Gastrocnemius medialis (tissue), 4 donors: ENCODE measurements at regions of chr5 and their contacts with region 1.

Region 1: DNA sequence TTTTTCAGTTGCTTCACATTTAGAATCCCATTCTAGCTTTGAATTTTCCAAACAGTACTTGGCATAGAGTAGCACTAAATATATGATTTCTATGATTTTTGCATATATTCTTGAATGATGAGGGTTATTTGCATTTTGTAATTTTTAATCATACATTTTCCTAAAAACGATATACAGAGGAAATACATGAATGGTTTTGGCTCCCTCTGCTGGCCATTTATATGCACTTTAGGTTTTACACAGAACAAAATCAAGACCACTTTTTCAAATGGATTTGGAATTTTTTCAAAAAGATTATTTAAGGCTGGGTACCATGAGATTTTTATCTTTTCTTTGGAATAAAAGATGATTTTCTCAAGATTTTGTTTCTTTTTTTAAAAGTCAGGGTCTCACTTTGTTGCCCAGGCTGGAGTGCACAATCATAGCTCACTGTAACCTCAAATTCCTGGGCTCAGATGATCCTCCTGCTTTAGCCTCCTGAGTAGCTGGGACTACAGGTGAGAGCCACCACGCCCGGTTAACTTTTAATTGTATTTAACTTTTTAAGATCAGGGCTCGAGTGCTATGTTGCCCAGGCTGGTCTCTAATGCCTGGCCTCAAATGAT is 16.7 kb upstream of the COMMD10 start:
- DNase-seq: no peak
- ATAC-seq: no peak
- H3K4me3 ChIP-seq: no peak overlapping the region
- H3K27ac ChIP-seq: no peak overlapping the region
- H3K4me1 ChIP-seq: no peaks in the 10 kb centered on the region
- H3K27me3 ChIP-seq: peaks cover 0 to 3% (median 0%) of the 10 kb centered on the region in 3 donors
- CTCF ChIP-seq: peak; percentile 54 to 83 (median 81)
- POLR2A ChIP-seq: no peak

Region 2: DNA sequence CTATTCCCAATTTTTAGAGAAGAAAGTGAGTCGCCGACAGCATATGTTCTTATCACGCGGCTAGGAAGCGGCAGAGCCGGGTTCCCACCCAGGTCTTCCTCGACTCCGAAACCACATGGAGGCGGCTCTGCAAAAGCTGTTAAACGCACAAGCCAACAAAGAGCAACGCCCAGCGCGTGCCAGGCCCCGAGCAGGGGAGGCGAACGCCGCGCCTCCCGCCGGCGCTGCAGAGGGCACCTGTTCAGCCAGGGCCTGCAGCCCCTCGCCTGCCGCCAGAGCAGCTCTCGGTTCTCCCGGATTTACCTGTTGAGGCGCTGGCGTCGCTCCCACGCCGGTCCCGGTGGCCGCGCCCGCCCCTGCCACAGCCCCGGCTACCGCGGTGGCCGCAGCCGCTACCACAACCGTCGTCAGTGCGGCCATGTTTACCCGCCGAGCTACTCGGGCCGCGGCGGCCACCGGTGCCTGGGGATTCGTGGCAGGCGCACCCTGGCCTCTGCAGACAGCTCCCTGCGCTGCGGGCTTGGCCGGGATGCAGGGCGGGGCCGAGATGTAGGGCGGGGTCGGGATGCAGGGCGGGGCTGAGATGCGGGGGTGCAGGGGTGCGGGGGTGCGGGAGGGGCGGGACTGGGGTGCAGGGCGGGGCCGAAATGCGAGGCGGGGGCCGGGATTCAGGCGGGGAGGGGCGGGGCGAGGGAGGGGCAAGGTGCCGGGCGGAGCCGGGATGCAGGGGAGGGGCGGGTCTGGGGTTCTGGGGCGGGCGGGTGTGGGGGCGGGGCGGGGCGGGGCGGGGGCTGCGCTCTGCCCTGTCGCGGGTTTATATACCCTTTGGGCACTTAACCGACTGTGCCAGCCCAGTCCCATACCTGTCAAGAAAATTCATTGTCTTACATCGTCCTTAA is 771.8 kb before region 1 on chr5 and contains the start of gene CCDC112:
- in situ Hi-C with region 1: loop called in 1 of 4 experiments (anchors 25 kb)
- intact Hi-C with region 1: no loop called
- DNase-seq: peak; percentile 45 to 55
- ATAC-seq: peak; percentile 67 to 81
- H3K4me3 ChIP-seq: peak within 1 kb of the TSS; percentile 71 to 91 (median 79)
- H3K27ac ChIP-seq: peak within 1 kb of the TSS in 3 of 4 donors; percentile 32 to 61 (median 39)
- H3K4me1 ChIP-seq: peaks cover 7 to 9% of the 10 kb centered on the region in 2 donors
- H3K27me3 ChIP-seq: no peaks in the 10 kb centered on the region
- CTCF ChIP-seq: no peak
- POLR2A ChIP-seq: peak in 1 of 2 donors; percentile 37
- total RNA-seq, gene CCDC112: 2.1 to 4.8 (median 3.8) TPM

Region 3: DNA sequence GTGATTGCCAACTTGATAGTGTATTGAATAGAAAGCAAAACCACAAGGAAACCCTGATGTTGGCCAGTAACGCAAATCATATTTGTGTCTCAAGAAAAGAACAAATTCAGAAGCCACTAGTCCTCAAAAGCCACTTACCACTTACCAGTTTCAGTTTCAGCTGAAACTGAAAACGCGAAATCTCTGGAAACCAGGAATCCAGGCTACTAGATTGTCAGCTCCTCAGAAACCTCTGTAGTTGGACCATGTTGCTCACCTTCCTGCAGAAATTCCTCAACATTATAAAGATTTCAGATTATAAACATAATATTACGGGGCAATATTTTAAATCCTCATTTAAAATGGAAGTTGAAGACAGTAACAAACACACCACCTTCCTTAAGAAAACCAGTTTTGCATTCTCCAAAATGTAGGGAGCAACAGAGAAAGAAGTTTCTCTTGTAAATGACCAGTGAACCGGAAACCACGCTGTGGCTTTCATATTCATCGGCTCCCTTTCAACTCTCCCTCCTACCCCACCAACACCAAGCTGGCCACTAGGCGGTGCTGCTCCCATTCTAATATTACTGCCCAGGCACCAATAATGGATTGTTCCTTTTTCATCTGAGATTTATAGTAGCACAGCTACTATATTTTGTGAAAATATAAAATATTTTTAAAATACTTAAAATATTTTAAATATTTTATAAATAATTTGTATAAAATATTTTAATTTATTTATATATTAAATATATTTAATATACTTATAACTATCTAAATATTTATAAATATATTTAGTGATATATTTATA is 433.6 kb before region 1 on chr5:
- in situ Hi-C with region 1: no loop called
- intact Hi-C with region 1: loop called (anchors 2 kb)
- DNase-seq: peak; percentile 65 to 77
- ATAC-seq: peak; percentile 91 to 99
- H3K4me3 ChIP-seq: peak overlapping the region; percentile 9 to 52 (median 37)
- H3K27ac ChIP-seq: peak overlapping the region; percentile 24 to 63 (median 33)
- H3K4me1 ChIP-seq: peaks cover 0 to 6% of the 10 kb centered on the region in 2 donors
- H3K27me3 ChIP-seq: no peaks in the 10 kb centered on the region
- CTCF ChIP-seq: peak; percentile 64 to 89 (median 83)
- POLR2A ChIP-seq: no peak

Region 4: DNA sequence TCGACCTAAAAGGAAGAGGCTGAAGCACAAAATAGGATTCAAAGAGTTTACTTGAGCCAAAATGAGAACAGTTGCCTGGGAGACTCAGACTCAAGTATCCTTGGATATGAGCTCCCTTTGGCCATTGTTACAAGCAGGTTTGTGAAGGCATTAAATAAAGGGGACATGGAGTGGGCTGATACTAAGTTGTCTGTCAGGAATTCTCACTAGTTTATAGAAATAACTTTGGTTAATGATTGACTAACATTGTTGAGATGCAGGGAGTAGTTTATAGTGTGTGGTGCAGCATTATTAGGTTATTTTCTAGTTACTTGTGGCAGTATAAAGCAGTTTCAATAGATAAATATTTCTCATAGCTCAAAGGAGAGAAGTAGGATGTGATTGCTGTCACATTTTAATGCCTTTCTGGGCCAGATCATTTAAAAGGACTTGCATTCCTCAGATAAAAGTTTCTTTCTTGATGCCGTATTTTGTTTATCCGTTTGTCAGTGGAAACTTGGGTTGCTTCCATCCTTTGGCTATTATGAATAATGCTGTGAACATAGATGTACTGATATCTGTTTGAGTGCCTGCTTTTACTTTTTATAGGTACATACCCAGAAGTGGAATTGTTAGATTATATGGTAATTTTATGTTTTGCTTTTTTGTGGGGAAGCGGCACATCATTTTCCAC is 217.2 kb before region 1 on chr5:
- in situ Hi-C with region 1: no loop called
- intact Hi-C with region 1: no loop called
- DNase-seq: no peak
- ATAC-seq: no peak
- H3K4me3 ChIP-seq: no peak overlapping the region
- H3K27ac ChIP-seq: no peak overlapping the region
- H3K4me1 ChIP-seq: peaks cover 12 to 16% of the 10 kb centered on the region in 2 donors
- H3K27me3 ChIP-seq: no peaks in the 10 kb centered on the region
- CTCF ChIP-seq: no peak
- POLR2A ChIP-seq: no peak

Region 5: GRCh38 chr5:115888027-115888426 is 180.1 kb before region 1 on chr5:
- in situ Hi-C with region 1: loop called in 2 of 4 experiments (anchors 25 kb)
- intact Hi-C with region 1: no loop called
- DNase-seq: no peak
- ATAC-seq: peak in 1 of 2 donors; percentile 33
- H3K4me3 ChIP-seq: no peak overlapping the region
- H3K27ac ChIP-seq: no peak overlapping the region
- H3K4me1 ChIP-seq: no peaks in the 10 kb centered on the region
- H3K27me3 ChIP-seq: no peaks in the 10 kb centered on the region
- CTCF ChIP-seq: no peak
- POLR2A ChIP-seq: no peak